Naive thymus-derived CD4-positive, alpha-beta T cell (primary cell): ENCODE measurements at regions of chr1 and their contacts with region 1.

Region 1: DNA sequence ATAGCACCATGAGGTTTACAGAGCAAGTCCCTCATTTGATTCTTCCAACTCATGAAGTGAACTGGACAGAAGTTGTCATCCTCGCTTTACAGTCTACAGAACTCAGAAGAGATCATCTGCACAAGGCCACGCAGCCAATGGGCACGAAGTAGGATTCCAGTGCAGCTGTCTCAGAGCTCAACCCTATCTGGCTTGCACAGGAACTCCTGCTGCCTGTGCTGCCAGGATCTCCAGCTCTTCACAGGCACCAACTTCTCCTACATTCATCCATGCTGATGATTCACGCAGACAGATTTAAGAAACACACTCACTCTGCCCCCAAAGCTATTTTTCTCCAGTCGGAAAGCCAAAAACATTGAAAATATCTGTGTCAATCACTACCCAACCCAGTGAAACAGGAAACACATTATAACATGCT is 157.0 kb downstream of the RERE start:
- DNase-seq: no peak
- ATAC-seq: peak; percentile 24
- H3K4me3 ChIP-seq: peak overlapping the region; percentile 20
- H3K4me3 Mint-ChIP-seq: no peak overlapping the region
- H3K27ac ChIP-seq: no peak overlapping the region
- H3K27ac Mint-ChIP-seq: no peak overlapping the region
- H3K4me1 ChIP-seq: peaks cover 0 to 41% of the 10 kb centered on the region in 2 donors
- H3K4me1 Mint-ChIP-seq: peaks cover 0 to 6% (median 5%) of the 10 kb centered on the region in 7 donors
- H3K27me3 ChIP-seq: no peaks in the 10 kb centered on the region
- H3K27me3 Mint-ChIP-seq: no peaks in the 10 kb centered on the region

Region 2: DNA sequence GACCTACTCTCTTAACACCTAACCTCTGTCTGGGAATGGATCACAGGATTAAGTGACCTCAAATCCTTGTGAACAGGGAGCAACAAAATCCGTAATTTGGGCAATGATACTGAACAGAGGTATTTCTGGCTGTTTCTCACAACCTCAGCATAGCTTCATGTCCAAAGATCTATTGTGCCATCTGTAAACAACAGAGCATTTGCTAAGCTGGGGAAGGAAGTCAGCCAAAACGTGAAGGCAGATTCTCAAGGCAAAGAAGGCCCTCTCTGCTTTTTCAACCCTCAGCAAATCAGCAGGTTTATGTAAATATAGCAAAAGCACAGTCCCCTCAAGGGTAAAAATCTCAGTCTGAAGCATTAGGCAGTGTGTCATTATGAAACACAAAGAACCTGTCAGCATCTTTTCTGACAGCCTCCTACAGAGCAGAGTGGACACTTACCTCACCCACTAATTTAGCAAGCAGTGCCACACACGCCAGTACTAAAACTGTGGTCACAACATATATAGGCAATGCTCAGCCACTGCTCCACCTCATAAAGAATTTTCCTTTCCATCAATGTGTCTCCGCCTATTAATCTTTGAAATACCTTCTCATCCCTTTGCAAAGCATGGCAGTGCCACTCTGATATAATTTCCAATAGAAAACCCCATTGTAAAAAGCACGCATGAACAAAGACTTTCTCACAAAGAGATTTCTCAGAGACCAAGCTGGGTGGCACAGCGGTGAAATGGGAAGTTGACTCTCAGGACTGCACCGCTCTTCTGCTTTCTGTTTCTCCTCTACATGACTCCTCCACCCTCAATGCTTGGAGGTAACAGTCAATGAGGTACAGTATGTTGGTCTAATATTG is 31.0 kb before region 1 on chr1:
- CTCF ChIA-PET with region 1: no interaction called
- POLR2A ChIA-PET with region 1: interaction called, 3 read pairs
- intact Hi-C with region 1: loop called in 1 of 2 experiments (anchors 5 kb)
- DNase-seq: peak in 2 of 9 donors; percentile 7 to 11
- ATAC-seq: peak; percentile 84
- H3K4me3 ChIP-seq: no peak overlapping the region
- H3K4me3 Mint-ChIP-seq: peak overlapping the region in 8 of 10 donors; percentile 37 to 66 (median 52)
- H3K27ac ChIP-seq: no peak overlapping the region
- H3K27ac Mint-ChIP-seq: peak overlapping the region in 6 of 9 donors; percentile 6 to 79 (median 18)
- H3K4me1 ChIP-seq: peaks cover 0 to 13% of the 10 kb centered on the region in 2 donors
- H3K4me1 Mint-ChIP-seq: peaks cover 25 to 66% (median 51%) of the 10 kb centered on the region in 7 donors
- H3K27me3 ChIP-seq: no peaks in the 10 kb centered on the region
- H3K27me3 Mint-ChIP-seq: no peaks in the 10 kb centered on the region

Region 3: DNA sequence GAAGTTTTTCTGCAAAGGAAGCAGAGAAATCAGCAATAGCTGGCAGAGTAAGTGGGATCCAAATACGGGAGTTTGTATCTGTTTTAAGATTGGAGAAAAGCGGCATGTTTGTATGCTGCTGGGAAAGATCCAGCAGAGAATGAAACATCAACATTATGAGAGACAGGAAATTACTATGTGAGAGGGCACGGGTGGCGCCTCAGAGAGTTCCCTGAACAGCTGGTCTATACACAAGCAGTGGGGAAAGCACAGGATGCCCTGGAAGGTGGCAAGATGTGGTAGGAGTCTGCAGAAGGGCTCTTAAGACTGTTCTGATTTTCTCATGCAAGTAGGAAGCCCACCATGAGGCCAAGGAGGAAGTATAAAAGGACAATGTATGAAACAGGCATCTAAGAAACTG is 26.6 kb after region 1 on chr1:
- CTCF ChIA-PET with region 1: no interaction called
- POLR2A ChIA-PET with region 1: no interaction called
- intact Hi-C with region 1: no loop called
- DNase-seq: no peak
- ATAC-seq: no peak
- H3K4me3 ChIP-seq: no peak overlapping the region
- H3K4me3 Mint-ChIP-seq: no peak overlapping the region
- H3K27ac ChIP-seq: no peak overlapping the region
- H3K27ac Mint-ChIP-seq: peak overlapping the region in 1 of 9 donors; percentile 30
- H3K4me1 ChIP-seq: no peaks in the 10 kb centered on the region
- H3K4me1 Mint-ChIP-seq: peaks cover 8 to 42% (median 19%) of the 10 kb centered on the region in 7 donors
- H3K27me3 ChIP-seq: no peaks in the 10 kb centered on the region
- H3K27me3 Mint-ChIP-seq: no peaks in the 10 kb centered on the region

Region 4: DNA sequence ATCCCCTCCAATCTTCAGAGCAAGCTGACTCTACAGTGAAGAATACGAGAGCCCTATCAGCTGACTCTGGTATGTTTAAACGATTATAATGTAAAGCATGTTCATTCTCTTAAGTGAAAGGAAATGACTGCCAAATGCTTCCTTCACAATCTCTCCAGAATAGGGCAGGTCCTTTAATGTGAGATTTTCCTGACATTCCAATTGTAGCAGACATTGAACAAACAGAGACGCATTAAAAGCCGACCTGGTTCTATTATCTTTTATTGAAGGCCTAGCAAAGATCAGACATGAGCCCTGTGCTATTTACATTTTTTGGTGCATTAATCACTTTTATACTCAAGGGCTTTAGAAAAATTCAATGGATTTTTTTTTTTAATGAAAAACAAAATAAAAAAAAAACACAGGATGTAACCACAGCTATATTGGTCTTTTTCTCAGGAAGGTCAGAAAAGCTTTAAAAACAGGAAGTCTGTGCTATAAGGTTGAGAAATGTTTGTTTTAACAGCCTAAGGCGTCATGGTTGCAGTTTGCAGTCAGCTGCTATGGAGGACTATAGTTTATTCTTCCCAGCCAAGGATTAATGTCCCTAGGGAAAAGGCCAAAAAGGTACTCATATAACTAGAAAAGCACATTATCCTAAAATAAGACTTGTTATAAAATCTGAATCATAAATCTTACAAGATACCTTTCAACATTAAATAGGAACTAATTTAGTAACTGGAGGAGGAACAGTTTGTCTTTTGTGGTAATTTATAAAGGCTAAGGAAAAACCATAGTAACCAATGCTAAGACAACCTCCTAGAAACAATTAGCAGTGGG is 52.2 kb after region 1 on chr1:
- CTCF ChIA-PET with region 1: no interaction called
- POLR2A ChIA-PET with region 1: no interaction called
- intact Hi-C with region 1: no loop called
- DNase-seq: peak in 4 of 9 donors; percentile 6 to 27 (median 16)
- ATAC-seq: peak; percentile 69
- H3K4me3 ChIP-seq: no peak overlapping the region
- H3K4me3 Mint-ChIP-seq: peak overlapping the region in 9 of 10 donors; percentile 19 to 80 (median 59)
- H3K27ac ChIP-seq: no peak overlapping the region
- H3K27ac Mint-ChIP-seq: peak overlapping the region; percentile 2 to 87 (median 48)
- H3K4me1 ChIP-seq: peaks cover 11 to 12% of the 10 kb centered on the region in 2 donors
- H3K4me1 Mint-ChIP-seq: peaks cover 10 to 32% (median 24%) of the 10 kb centered on the region in 7 donors
- H3K27me3 ChIP-seq: no peaks in the 10 kb centered on the region
- H3K27me3 Mint-ChIP-seq: peaks cover 0 to 26% (median 12%) of the 10 kb centered on the region in 5 donors